WTC11 (cell line): ENCODE measurements at regions of chr7 and their contacts with region 1.

Region 1: DNA sequence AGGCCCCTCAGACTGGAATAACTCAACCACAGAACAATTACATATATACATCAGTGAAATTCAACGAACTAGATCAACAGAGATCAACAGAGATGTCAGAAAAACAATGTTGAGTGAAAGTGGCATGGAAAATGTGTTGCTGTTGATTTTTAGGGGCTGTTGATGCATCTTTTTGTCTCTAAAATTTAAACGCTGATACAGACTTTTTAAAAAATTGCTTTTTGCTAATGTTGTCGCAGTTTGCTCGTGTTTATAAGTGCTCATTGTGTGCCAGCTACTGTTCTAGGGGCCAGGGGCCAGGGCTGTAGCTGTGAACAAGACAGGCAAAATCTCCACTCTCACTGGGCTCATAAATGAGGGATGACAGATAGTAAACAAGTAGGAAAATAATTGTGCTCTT is 18.3 kb downstream of the TMEM248 start:
- DNase-seq: no peak
- ATAC-seq: no peak
- H3K4me3 Mint-ChIP-seq: no peak overlapping the region
- H3K27ac Mint-ChIP-seq: no peak overlapping the region; the same call in 1 of the 2 replicates
- H3K4me1 Mint-ChIP-seq: no peaks in the 10 kb centered on the region
- H3K27me3 Mint-ChIP-seq: no peaks in the 10 kb centered on the region
- CTCF ChIP-seq: no peak

Region 2: GRCh38 chr7:67006971-67007370 is 67.6 kb after region 1 on chr7:
- CTCF ChIA-PET with region 1: no interaction called
- POLR2A ChIA-PET with region 1: interaction called, 10 read pairs
- DNase-seq: no peak
- ATAC-seq: no peak
- H3K4me3 Mint-ChIP-seq: no peak overlapping the region
- H3K27ac Mint-ChIP-seq: no peak overlapping the region
- H3K4me1 Mint-ChIP-seq: peaks cover 9% of the 10 kb centered on the region
- H3K27me3 Mint-ChIP-seq: no peaks in the 10 kb centered on the region
- CTCF ChIP-seq: no peak